ENCODE measurements at regions of chr2 and their contacts with region 1.

Region 1: GRCh38 chr2:219294356-219295351 is 14.5 kb downstream of the PTPRN start:
- DNase-seq: peak; percentile 92
- ATAC-seq: peak; percentile 97

Region 2: DNA sequence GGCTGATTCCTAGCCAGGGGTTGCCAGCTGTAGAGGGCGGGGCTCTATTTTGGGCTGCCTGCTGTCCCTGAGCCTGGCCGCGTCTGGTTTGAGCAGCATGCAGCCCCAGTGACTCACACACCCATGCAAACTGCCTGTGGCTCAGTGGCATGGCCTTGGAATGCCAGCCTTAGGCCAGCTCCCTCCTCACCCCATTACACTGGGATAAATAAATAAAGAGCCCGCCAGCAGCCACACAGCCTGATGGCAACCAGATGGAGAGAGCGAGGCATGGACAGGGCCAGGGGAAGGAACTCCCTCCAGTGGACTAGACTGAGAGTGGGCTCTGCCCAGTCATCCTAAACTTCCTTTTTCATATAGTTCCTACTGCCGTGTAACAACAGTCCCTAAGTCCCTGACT is 152.3 kb before region 1 on chr2:
- intact Hi-C with region 1: no loop called
- DNase-seq: no peak
- ATAC-seq: no peak

Region 3: GRCh38 chr2:219160186-219161017 is 134.3 kb before region 1 on chr2 and contains the start of gene NHEJ1:
- intact Hi-C with region 1: loop called (anchors 2 kb)
- DNase-seq: peak; percentile 99
- ATAC-seq: peak; percentile 98
- total RNA-seq, gene NHEJ1: 7.5 TPM

Region 4: GRCh38 chr2:219177552-219178376 is 116.9 kb before region 1 on chr2 and contains the start of gene RETREG2:
- intact Hi-C with region 1: loop called (anchors 5 kb)
- DNase-seq: peak; percentile 90
- ATAC-seq: peak; percentile 81
- total RNA-seq, gene RETREG2: 36.8 TPM

Region 5: GRCh38 chr2:219278655-219279516 is 15.8 kb before region 1 on chr2 and contains the start of gene DNAJB2:
- intact Hi-C with region 1: loop called (anchors 2 kb)
- DNase-seq: peak; percentile 99
- ATAC-seq: peak; percentile 97
- total RNA-seq, gene DNAJB2: 83.3 TPM

Measured in Right ventricle myocardium superior (tissue), 1 donor.